ENCODE measurements at regions of chr11 and their contacts with region 1.

Region 1: DNA sequence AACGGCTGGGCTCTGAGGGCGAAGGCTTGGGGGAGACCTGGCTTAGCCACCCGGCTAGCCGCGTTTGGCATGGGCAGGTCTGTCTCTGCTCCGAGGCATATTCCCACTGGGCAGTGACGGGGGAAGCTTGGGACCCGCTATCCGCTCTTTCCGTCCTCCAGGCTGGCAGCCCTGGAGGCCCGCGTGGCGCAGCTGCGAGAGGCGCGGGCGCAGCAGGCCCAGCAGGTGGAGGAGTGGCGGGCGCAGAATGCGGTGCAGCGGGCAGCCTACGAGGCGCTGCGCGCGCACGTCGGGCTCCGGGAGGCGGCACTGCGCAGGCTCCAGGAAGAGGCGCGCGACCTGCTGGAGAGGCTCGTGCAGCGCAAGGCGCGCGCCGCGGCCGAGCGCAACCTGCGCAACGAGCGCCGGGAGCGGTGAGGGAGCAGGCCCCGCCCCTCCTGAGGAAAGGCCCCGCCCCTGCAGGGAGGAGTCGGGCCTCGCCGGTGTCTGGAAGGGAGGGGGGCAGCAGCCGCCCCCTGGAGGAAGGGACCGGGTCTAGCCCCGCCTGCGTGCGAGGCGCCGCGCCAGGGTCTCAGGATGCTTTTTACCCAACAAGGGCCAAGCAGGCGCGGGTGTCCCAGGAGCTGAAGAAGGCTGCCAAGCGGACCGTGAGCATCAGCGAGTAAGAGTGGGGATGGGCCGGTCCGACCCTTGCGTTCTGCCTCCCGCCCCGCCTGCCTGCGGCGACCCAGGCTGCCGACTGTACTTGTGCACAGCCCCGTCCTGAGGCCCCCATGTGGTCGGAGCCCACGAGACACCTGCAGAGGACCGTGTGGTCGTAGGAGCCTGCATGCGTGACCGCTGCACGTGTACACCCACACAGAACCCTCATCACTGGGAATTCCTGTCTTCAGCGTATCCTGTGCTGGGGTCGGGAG is 7.9 kb downstream of the ATG16L2 start:
- DNase-seq: peak; percentile 90
- ATAC-seq: peak; percentile 84
- H3K4me3 ChIP-seq: peak overlapping the region in 3 of 5 experiments; percentile 29 to 44 (median 43)
- H3K4me3 Mint-ChIP-seq: peak overlapping the region; percentile 69
- H3K27ac ChIP-seq: peak overlapping the region; percentile 59 to 86
- H3K27ac Mint-ChIP-seq: peak overlapping the region; percentile 95
- H3K4me1 ChIP-seq: peaks cover 16 to 33% of the 10 kb centered on the region in 2 donors
- H3K4me1 Mint-ChIP-seq: peaks cover 52% of the 10 kb centered on the region
- H3K27me3 ChIP-seq: no peaks in the 10 kb centered on the region
- H3K27me3 Mint-ChIP-seq: no peaks in the 10 kb centered on the region
- CTCF ChIP-seq: peak; percentile 52

Region 2: GRCh38 chr11:72439455-72439854 is 382.7 kb before region 1 on chr11:
- CTCF ChIA-PET with region 1: no interaction called
- POLR2A ChIA-PET with region 1: no interaction called
- intact Hi-C with region 1: no loop called
- DNase-seq: no peak
- ATAC-seq: no peak
- H3K4me3 ChIP-seq: no peak overlapping the region
- H3K4me3 Mint-ChIP-seq: no peak overlapping the region
- H3K27ac ChIP-seq: no peak overlapping the region
- H3K27ac Mint-ChIP-seq: no peak overlapping the region
- H3K4me1 ChIP-seq: peaks cover 0 to 7% of the 10 kb centered on the region in 2 donors
- H3K4me1 Mint-ChIP-seq: peaks cover 7% of the 10 kb centered on the region
- H3K27me3 ChIP-seq: peaks cover 0 to 2% (median 0%) of the 10 kb centered on the region in 4 experiments
- H3K27me3 Mint-ChIP-seq: peaks cover 11% of the 10 kb centered on the region
- CTCF ChIP-seq: no peak

Region 3: DNA sequence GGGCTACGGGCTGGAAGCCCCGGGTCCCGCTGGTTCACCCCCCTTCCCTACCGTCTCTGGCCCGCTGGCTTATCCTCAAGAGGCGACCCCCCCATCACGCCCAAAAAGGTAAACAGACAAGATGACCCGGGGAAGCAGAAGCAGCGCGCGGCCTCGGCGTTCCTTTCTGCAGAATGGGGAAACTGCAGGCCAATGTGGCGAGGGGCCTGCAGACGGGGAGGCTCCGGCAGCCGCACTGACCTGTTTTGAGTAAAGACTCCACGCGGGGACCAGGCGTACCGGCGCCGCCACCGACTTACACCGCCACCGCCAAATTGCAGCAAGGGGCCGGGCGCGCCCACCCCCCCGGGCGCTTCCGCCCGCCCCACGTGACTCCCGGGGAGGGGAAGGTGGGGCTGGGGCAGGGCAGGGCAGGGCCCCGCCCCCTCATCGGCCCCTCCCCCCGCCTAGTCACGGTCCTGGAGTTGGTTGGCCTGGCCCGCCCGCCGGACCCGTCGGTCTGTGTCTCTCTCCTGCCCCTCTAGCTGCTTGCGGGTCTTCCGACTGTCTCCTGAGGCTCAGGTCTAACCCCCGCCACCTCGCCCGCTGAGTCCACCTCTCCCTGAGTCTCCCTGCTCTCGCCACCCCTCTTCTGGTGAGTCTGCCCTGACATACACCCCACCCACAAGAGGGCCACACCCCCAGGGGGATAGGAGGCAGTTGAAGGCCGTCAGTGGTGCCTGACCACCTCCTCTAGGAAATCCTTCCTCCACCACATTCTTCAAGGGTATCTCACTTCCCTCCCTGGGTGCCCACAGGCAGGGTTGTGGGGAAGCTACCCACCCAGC is 69.8 kb before region 1 on chr11 and contains the start of gene ARAP1:
- CTCF ChIA-PET with region 1: no interaction called
- POLR2A ChIA-PET with region 1: no interaction called
- intact Hi-C with region 1: loop called (anchors 2 kb)
- DNase-seq: peak; percentile 87
- ATAC-seq: peak; percentile 91
- H3K4me3 ChIP-seq: peak within 1 kb of the TSS; percentile 63 to 93 (median 82)
- H3K4me3 Mint-ChIP-seq: peak within 1 kb of the TSS; percentile 99
- H3K27ac ChIP-seq: peak within 1 kb of the TSS; percentile 65 to 79
- H3K27ac Mint-ChIP-seq: peak within 1 kb of the TSS; percentile 96
- H3K4me1 ChIP-seq: peaks cover 42 to 53% of the 10 kb centered on the region in 2 donors
- H3K4me1 Mint-ChIP-seq: peaks cover 45% of the 10 kb centered on the region
- H3K27me3 ChIP-seq: no peaks in the 10 kb centered on the region
- H3K27me3 Mint-ChIP-seq: no peaks in the 10 kb centered on the region
- CTCF ChIP-seq: peak; percentile 12
- total RNA-seq, gene ARAP1: 233 and 242 TPM in 2 replicates

Region 4: DNA sequence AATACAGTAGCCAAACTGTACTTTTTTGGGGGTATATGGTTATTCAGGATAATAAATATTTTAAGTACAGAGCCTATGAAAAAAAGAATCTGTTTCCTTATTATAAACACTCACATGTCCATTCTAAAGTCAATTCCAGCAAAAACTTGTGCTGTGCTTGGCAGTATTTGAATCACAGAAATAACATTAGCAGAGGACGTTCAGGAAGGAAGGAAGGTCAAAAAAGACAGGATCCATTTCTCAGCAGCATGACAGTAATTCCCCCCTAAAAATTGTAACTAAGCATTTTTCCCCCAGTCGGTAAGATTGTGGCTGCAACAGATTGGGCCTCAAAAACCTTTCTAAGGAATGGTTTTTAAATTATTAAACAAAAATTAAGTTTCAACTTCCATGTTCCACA is 116.9 kb after region 1 on chr11:
- CTCF ChIA-PET with region 1: no interaction called
- POLR2A ChIA-PET with region 1: no interaction called
- intact Hi-C with region 1: no loop called
- DNase-seq: no peak
- ATAC-seq: no peak
- H3K4me3 ChIP-seq: no peak overlapping the region
- H3K4me3 Mint-ChIP-seq: no peak overlapping the region
- H3K27ac ChIP-seq: peak overlapping the region in 1 of 2 donors; percentile 55
- H3K27ac Mint-ChIP-seq: peak overlapping the region; percentile 3
- H3K4me1 ChIP-seq: peaks cover 17 to 24% of the 10 kb centered on the region in 2 donors
- H3K4me1 Mint-ChIP-seq: peaks cover 61% of the 10 kb centered on the region
- H3K27me3 ChIP-seq: no peaks in the 10 kb centered on the region
- H3K27me3 Mint-ChIP-seq: no peaks in the 10 kb centered on the region
- CTCF ChIP-seq: no peak

Region 5: DNA sequence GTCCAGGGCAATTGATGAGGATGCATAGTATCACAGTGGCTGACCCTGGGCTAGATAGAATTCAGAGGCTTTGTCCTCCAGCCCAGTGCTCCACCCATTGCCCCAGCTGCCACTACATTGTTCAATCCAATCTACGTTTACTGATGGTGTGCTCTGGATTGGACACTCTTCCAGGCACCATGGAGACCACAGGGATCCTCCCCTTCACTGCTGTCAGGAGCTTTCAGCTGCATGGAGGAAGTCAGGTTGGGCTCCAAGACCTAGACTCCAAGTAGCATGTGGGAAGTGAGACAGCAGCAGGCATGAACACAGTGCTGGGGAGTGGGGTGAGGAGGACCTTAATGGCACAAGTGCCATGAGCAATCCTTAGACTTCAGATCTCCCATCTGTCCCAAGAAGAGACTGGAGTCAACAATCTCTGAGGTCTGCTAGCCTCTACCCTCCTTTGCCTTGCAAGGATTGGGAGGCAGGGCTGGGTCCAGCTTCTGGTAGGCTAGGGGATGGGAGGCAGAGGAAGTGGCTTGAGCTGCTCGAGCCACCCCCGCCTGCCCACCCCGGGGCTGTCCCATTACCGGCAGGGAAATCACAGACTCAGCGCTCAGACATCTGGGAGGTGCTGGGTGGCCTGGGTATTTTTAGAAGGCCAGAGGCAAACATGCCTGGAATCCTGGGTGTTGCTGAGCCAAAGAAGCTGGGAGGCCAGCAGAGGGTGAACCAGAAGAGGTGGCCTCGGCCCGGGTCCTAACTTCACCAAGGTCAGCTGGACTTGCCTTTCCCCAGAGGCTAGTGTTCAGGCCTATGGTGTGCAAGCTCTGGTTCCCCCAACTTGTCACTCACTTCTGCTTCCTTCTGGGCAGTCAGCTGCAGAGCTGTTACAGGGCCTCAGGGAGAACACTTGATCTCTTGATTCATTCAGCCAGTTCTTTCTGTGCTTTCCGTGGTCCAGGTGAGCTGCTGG is 335.2 kb after region 1 on chr11:
- CTCF ChIA-PET with region 1: no interaction called
- POLR2A ChIA-PET with region 1: no interaction called
- intact Hi-C with region 1: loop called (anchors 5 kb)
- DNase-seq: peak; percentile 74
- ATAC-seq: peak; percentile 36
- H3K4me3 ChIP-seq: peak overlapping the region in 3 of 5 experiments; percentile 12 to 30 (median 17)
- H3K4me3 Mint-ChIP-seq: peak overlapping the region; percentile 77
- H3K27ac ChIP-seq: peak overlapping the region; percentile 86 to 94
- H3K27ac Mint-ChIP-seq: peak overlapping the region; percentile 95
- H3K4me1 ChIP-seq: peaks cover 91 to 94% of the 10 kb centered on the region in 2 donors
- H3K4me1 Mint-ChIP-seq: peaks cover 93% of the 10 kb centered on the region
- H3K27me3 ChIP-seq: no peaks in the 10 kb centered on the region
- H3K27me3 Mint-ChIP-seq: no peaks in the 10 kb centered on the region
- CTCF ChIP-seq: no peak

Region 6: GRCh38 chr11:73376160-73376802 is 554.1 kb after region 1 on chr11 and contains the start of gene RELT:
- CTCF ChIA-PET with region 1: no interaction called
- POLR2A ChIA-PET with region 1: no interaction called
- intact Hi-C with region 1: loop called (anchors 2 kb)
- DNase-seq: peak; percentile 97
- ATAC-seq: peak; percentile 87
- H3K4me3 ChIP-seq: peak within 1 kb of the TSS; percentile 62 to 95 (median 92)
- H3K4me3 Mint-ChIP-seq: peak within 1 kb of the TSS; percentile 100
- H3K27ac ChIP-seq: peak within 1 kb of the TSS; percentile 98
- H3K27ac Mint-ChIP-seq: peak within 1 kb of the TSS; percentile 99
- H3K4me1 ChIP-seq: peaks cover 65 to 83% of the 10 kb centered on the region in 2 donors
- H3K4me1 Mint-ChIP-seq: peaks cover 75% of the 10 kb centered on the region
- H3K27me3 ChIP-seq: no peaks in the 10 kb centered on the region
- H3K27me3 Mint-ChIP-seq: no peaks in the 10 kb centered on the region
- CTCF ChIP-seq: peak; percentile 94
- total RNA-seq, gene RELT: 92.4 and 97.1 TPM in 2 replicates